ENCODE measurements at regions of chr17 and their contacts with region 1.

Region 1: GRCh38 chr17:40287494-40288369 is at the start of gene CDC6:
- DNase-seq: peak; percentile 99
- H3K4me3 ChIP-seq: peak within 1 kb of the TSS; percentile 26 to 50 (median 46)
- H3K27ac ChIP-seq: peak within 1 kb of the TSS; percentile 41 to 43 (median 42)
- H3K4me1 ChIP-seq: peaks cover 0 to 28% (median 16%) of the 10 kb centered on the region in 4 donors
- H3K27me3 ChIP-seq: no peaks in the 10 kb centered on the region
- CTCF ChIP-seq: no peak
- EP300 ChIP-seq: peak in 1 of 4 donors; percentile 50
- POLR2A ChIP-seq: no peak
- total RNA-seq, gene CDC6: 0.33 to 1.5 (median 0.83) TPM in 3 of 4 donors, not detected in the other

Region 2: GRCh38 chr17:40019140-40019991 is 268.4 kb before region 1 on chr17:
- intact Hi-C with region 1: loop called (anchors 5 kb)
- DNase-seq: peak; percentile 77
- H3K4me3 ChIP-seq: no peak overlapping the region
- H3K27ac ChIP-seq: peak overlapping the region; percentile 55 to 79 (median 72)
- H3K4me1 ChIP-seq: peaks cover 0 to 56% (median 43%) of the 10 kb centered on the region in 4 donors
- H3K27me3 ChIP-seq: no peaks in the 10 kb centered on the region
- CTCF ChIP-seq: no peak
- EP300 ChIP-seq: no peak
- POLR2A ChIP-seq: no peak

Region 3: DNA sequence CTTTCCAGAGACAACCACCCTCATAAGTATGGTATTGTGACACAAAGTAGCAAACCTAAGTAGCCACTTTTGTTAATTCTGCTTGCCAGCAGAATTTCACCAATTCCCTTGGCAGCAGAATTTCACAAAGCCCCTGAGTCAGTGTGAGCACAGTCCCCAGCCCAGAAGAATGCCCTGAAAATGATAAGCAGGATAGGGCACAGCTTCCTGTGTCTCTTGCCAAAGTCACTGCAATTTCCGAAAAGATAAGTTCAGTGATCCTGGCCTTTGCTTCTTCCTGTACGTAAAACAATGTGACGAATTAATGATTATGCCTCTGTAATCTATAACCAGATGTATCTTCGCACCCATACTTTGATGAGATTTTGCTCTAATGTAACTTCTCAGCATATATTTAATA is 84.6 kb before region 1 on chr17:
- intact Hi-C with region 1: loop called (anchors 1 kb)
- DNase-seq: no peak
- H3K4me3 ChIP-seq: no peak overlapping the region
- H3K27ac ChIP-seq: no peak overlapping the region
- H3K4me1 ChIP-seq: peaks cover 0 to 8% (median 4%) of the 10 kb centered on the region in 4 donors
- H3K27me3 ChIP-seq: no peaks in the 10 kb centered on the region
- CTCF ChIP-seq: no peak
- EP300 ChIP-seq: no peak
- POLR2A ChIP-seq: no peak

Region 4: GRCh38 chr17:40219073-40219860 is 68.5 kb before region 1 on chr17 and contains the start of gene WIPF2:
- intact Hi-C with region 1: loop called (anchors 5 kb)
- DNase-seq: peak; percentile 99
- H3K4me3 ChIP-seq: peak within 1 kb of the TSS; percentile 66 to 89 (median 72)
- H3K27ac ChIP-seq: peak within 1 kb of the TSS; percentile 92 to 93 (median 92)
- H3K4me1 ChIP-seq: peaks cover 0 to 19% (median 15%) of the 10 kb centered on the region in 4 donors
- H3K27me3 ChIP-seq: no peaks in the 10 kb centered on the region
- CTCF ChIP-seq: peak; percentile 34 to 82 (median 72)
- EP300 ChIP-seq: no peak
- POLR2A ChIP-seq: peak; percentile 54 to 60
- total RNA-seq, gene WIPF2: 6.7 to 10.2 (median 8.7) TPM

Region 5: GRCh38 chr17:40331743-40332641 is 44.3 kb after region 1 on chr17:
- intact Hi-C with region 1: no loop called
- DNase-seq: peak; percentile 95
- H3K4me3 ChIP-seq: peak overlapping the region in 3 of 4 donors; percentile 15 to 22 (median 16)
- H3K27ac ChIP-seq: peak overlapping the region; percentile 87 to 98 (median 96)
- H3K4me1 ChIP-seq: peaks cover 0 to 100% (median 95%) of the 10 kb centered on the region in 4 donors
- H3K27me3 ChIP-seq: no peaks in the 10 kb centered on the region
- CTCF ChIP-seq: no peak
- EP300 ChIP-seq: peak in 3 of 4 donors; percentile 47 to 79 (median 57)
- POLR2A ChIP-seq: no peak

Region 6: GRCh38 chr17:40417609-40418427 is 130.1 kb after region 1 on chr17 and contains the start of gene TOP2A:
- intact Hi-C with region 1: no loop called
- DNase-seq: peak; percentile 99
- H3K4me3 ChIP-seq: peak within 1 kb of the TSS; percentile 36 to 59 (median 56)
- H3K27ac ChIP-seq: peak within 1 kb of the TSS; percentile 77 to 88 (median 80)
- H3K4me1 ChIP-seq: peaks cover 0 to 17% (median 10%) of the 10 kb centered on the region in 4 donors
- H3K27me3 ChIP-seq: no peaks in the 10 kb centered on the region
- CTCF ChIP-seq: no peak
- EP300 ChIP-seq: no peak
- POLR2A ChIP-seq: no peak
- total RNA-seq, gene TOP2A: 0.33 to 2.3 (median 1.8) TPM

Measured in sigmoid colon (tissue), 7 donors.